Heart right ventricle (tissue), 16 donors: ENCODE measurements at regions of chr15 and their contacts with region 1.

Region 1: DNA sequence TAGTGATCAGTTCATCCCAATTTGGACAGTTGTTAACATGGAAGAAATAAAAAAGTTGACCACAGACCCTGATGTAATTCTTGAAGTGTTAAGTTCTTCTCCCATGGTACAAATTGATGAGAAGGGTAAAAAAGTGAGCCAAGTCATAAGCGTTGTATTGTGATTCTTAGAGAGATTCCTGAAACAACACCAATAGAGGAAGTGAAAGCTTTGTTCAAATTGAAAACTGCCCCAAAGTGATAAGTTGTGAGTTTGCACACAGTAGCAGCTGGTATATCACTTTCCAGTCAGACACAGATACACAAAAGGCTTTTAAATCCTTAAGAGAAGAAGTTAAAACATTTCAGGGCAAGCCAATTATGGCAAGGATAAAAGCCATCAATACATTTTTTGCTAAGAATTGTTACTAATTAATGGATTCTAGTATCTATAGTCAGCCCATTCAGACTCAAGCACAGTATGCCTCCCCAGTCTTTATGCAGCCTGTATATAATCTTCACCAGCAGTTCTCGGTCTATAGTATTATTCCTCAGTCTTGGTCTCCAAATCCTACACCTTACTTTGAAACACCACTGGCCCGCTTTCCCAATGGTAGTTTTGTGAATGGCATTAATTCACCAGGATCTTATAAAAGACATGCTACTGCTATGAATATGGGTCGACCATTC is 38.2 kb downstream of the CDIN1 start:
- DNase-seq: no peak
- ATAC-seq: no peak
- H3K4me3 ChIP-seq: no peak overlapping the region
- H3K27ac ChIP-seq: no peak overlapping the region
- H3K4me1 ChIP-seq: peaks cover 0 to 21% (median 7%) of the 10 kb centered on the region in 9 donors
- H3K27me3 ChIP-seq: no peaks in the 10 kb centered on the region
- CTCF ChIP-seq: no peak

Region 2: GRCh38 chr15:36567445-36567844 is 50.2 kb before region 1 on chr15:
- intact Hi-C with region 1: loop called in 2 of 10 experiments (anchors 5 to 10 kb)
- DNase-seq: no peak
- ATAC-seq: no peak
- H3K4me3 ChIP-seq: no peak overlapping the region
- H3K27ac ChIP-seq: no peak overlapping the region
- H3K4me1 ChIP-seq: peaks cover 0 to 8% (median 0%) of the 10 kb centered on the region in 9 donors
- H3K27me3 ChIP-seq: no peaks in the 10 kb centered on the region
- CTCF ChIP-seq: no peak

Region 3: DNA sequence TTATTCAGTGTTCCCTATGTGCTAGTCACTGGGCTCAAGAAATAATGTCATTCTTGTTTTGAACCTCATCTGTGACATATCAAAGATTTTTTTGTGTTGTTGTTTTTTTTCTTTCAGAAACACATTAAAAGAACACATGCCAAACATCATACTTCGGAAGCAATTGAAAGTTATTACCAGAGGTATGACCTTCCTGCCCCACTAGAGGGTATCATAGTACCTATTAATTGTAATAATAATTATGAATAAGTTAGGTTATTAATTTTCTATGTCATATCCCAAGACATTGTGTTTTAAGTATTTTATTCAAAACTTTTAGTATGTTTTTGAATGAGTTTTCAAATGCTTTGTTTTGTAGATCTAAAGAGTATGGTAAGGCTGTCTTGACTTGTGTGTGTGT is 27.4 kb after region 1 on chr15:
- intact Hi-C with region 1: no loop called
- DNase-seq: no peak
- ATAC-seq: no peak
- H3K4me3 ChIP-seq: no peak overlapping the region
- H3K27ac ChIP-seq: no peak overlapping the region
- H3K4me1 ChIP-seq: peaks cover 0 to 28% (median 0%) of the 10 kb centered on the region in 9 donors
- H3K27me3 ChIP-seq: no peaks in the 10 kb centered on the region
- CTCF ChIP-seq: peak in 6 of 9 donors; percentile 15 to 47 (median 27)

Region 4: GRCh38 chr15:36658312-36658711 is 40.6 kb after region 1 on chr15:
- intact Hi-C with region 1: no loop called
- DNase-seq: no peak
- ATAC-seq: no peak
- H3K4me3 ChIP-seq: no peak overlapping the region
- H3K27ac ChIP-seq: no peak overlapping the region
- H3K4me1 ChIP-seq: peaks cover 0 to 13% (median 0%) of the 10 kb centered on the region in 9 donors
- H3K27me3 ChIP-seq: no peaks in the 10 kb centered on the region
- CTCF ChIP-seq: no peak

Region 5: GRCh38 chr15:36798366-36798765 is 180.7 kb after region 1 on chr15:
- intact Hi-C with region 1: loop called in 1 of 10 experiments (anchors 10 kb)
- DNase-seq: no peak
- ATAC-seq: no peak
- H3K4me3 ChIP-seq: no peak overlapping the region
- H3K27ac ChIP-seq: no peak overlapping the region
- H3K4me1 ChIP-seq: peaks cover 0 to 18% (median 2%) of the 10 kb centered on the region in 9 donors
- H3K27me3 ChIP-seq: no peaks in the 10 kb centered on the region
- CTCF ChIP-seq: no peak